MCF 10A (cell line): ENCODE measurements at regions of chr2 and their contacts with region 1.

Region 1: DNA sequence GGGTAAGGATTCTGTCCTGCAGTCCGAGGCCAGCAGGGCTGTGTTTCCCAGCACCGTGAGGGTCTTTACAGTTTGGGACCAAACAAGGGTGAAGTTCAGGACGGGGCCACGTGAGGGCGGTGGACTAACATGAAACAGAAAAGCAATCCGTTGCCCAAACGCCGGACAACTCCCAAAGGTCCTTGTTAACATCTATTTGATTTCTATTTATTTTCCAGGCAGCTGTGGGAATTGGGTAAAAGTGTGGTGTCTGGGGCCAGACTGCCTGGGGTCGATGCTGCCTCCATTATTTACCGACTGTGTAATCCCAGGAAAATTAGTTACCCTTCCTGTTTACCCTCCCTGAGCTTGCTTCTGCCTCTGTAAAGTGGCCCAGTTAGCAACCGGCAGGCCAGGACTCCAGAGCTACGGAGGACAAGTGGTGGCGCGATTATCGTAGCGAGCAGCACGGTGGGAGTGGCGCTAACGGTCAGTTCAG is 66.3 kb upstream of the TCF7L1 start:
- DNase-seq: peak; percentile 79
- H3K4me3 Mint-ChIP-seq: no peak overlapping the region
- H3K27ac Mint-ChIP-seq: no peak overlapping the region
- H3K4me1 Mint-ChIP-seq: peaks cover 7% of the 10 kb centered on the region
- H3K27me3 Mint-ChIP-seq: peaks cover 11% of the 10 kb centered on the region
- CTCF ChIP-seq: peak; percentile 88

Region 2: DNA sequence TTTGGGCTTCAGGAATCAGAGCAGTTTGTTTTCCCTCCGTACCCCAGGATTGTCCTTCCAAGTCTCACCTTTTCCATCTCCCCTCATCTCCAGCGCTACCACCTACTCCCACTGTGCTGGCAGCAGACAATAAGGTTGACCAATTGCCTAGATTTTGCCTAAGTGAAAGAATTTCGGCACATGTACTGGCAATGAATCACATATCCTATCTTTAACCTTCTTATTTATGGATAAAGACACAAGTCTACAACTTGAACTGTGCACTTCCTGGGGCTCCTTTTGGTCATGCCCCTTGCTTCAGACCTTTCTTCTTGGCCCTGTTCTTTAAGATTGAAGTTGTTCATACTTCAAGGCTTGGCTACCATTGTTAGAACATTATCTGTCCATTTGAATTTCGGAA is 24.6 kb before region 1 on chr2:
- CTCF ChIA-PET with region 1: interaction called, 19 read pairs
- POLR2A ChIA-PET with region 1: no interaction called
- intact Hi-C with region 1: no loop called
- DNase-seq: no peak
- H3K4me3 Mint-ChIP-seq: no peak overlapping the region
- H3K27ac Mint-ChIP-seq: peak overlapping the region; percentile 29
- H3K4me1 Mint-ChIP-seq: peaks cover 12% of the 10 kb centered on the region
- H3K27me3 Mint-ChIP-seq: no peaks in the 10 kb centered on the region
- CTCF ChIP-seq: no peak

Region 3: DNA sequence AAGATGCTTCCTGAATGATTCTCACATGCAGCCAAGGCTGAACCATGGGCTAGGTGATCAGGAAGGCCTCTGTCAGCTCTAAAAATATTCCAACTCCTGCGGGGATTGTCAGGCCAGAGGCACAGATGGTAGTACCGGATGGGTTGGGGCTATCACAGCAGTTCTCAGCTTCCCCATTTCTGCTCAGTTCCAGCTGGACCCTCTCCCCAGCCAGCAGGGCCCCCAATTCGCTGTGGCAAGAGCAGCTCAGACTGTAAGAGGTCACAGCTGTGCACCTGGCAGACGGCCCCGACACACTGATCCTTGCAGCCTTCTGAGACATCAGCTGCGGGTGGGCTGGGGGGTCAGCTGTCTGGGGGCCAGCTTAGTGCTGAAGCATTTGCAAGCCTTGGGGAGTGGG is 22.7 kb after region 1 on chr2:
- CTCF ChIA-PET with region 1: interaction called, 10 read pairs
- POLR2A ChIA-PET with region 1: interaction called, 3 read pairs
- intact Hi-C with region 1: no loop called
- DNase-seq: no peak
- H3K4me3 Mint-ChIP-seq: no peak overlapping the region
- H3K27ac Mint-ChIP-seq: no peak overlapping the region
- H3K4me1 Mint-ChIP-seq: no peaks in the 10 kb centered on the region
- H3K27me3 Mint-ChIP-seq: no peaks in the 10 kb centered on the region
- CTCF ChIP-seq: no peak

Region 4: DNA sequence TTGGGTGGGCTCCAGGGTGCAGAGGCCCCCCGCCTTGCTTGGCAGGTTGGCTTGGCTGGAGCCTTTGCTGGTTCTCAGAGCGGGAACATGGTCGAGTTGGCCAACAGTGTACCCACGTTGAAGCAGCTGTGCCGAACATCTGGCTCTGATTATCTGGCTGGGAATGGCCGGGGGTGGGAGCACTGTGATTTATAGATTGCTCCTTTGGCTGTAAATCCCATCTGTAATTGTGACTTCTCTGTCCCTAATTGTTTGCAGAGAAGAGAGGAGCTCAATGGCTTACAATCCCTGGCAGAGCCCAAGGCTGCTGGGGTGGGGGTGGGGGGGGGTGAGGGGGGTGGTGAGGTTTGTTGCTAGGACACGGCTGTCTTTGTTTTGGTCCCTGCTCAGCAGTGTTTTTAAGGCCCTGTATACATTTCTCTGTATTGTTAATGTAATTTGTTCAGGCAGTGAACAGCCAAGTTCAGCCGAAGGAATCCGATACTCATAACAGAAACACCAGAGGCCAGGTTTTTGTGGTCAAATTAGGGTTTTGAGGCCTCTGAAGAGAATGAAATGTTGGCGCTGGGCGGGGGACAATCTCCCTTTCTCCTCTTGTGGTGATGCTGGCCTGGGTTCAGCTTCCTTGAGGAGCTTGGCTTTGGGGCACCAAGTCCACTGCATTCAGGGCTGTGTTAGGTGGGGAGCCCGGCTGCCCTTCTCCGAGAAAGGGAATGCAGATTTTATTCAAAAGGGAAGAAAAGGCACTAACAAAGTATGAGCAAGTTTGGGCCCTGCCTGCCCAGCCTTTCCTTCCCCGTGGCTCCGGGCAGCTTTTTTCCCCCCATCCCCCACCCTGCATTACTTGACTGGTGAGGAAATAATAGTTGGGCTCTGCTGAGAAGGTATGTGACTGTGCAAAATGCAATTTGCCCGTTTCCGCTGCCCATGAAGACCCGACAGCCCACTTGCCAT is 148.8 kb after region 1 on chr2:
- CTCF ChIA-PET with region 1: interaction called, 14 read pairs
- POLR2A ChIA-PET with region 1: no interaction called
- intact Hi-C with region 1: no loop called
- DNase-seq: no peak
- H3K4me3 Mint-ChIP-seq: no peak overlapping the region
- H3K27ac Mint-ChIP-seq: no peak overlapping the region
- H3K4me1 Mint-ChIP-seq: no peaks in the 10 kb centered on the region
- H3K27me3 Mint-ChIP-seq: no peaks in the 10 kb centered on the region
- CTCF ChIP-seq: no peak

Region 5: GRCh38 chr2:85288244-85288725 is 221.4 kb after region 1 on chr2:
- CTCF ChIA-PET with region 1: interaction called, 295 read pairs
- POLR2A ChIA-PET with region 1: interaction called, 35 read pairs
- intact Hi-C with region 1: loop called (anchors 1 kb)
- DNase-seq: peak; percentile 79
- H3K4me3 Mint-ChIP-seq: peak overlapping the region; percentile 56
- H3K27ac Mint-ChIP-seq: peak overlapping the region; percentile 92
- H3K4me1 Mint-ChIP-seq: peaks cover 31% of the 10 kb centered on the region
- H3K27me3 Mint-ChIP-seq: no peaks in the 10 kb centered on the region
- CTCF ChIP-seq: no peak